CD8-positive, alpha-beta memory T cell (primary cell): ENCODE measurements at regions of chr1 and their contacts with region 1.

Region 1: DNA sequence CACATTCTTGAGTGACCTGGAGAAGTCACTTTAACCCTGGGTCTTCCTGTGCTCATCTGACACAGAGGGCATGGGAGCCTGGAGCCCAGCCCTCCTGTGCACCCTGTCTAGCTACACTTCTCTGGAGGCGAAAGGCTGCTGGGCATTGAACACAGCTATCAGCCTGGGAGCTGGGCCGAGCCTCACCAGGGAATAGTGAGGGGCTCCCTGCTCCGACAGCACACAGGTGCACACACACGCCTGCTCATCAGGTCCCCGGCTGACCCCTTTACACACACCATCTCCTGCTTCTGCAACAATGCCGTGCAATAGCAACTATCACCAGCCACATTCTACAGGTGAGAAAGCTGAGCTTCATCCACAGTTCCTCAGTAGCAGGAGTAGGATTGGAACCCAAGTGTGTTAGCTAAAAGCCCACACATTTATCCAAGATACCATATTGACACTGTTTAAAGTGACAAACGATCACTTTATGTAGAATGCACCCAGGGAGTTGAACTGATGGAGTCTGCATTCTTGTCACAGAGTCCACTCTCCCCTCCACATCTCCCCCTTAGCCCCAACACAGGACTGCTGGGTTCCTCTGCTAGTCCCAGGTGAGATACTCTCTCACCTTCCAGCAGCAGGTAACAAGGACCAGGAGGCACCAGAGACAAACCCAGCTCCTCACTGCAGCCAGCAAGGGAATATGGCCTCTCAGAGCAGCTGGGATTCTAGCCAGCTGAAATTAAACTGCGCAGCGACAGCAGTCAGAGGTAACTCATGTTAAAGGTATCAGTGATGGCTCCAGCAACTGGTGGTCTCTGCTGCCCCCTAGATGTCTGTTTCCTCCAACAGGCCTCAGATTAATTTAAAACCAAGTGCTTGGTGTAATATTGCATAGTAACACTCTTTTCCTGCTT is 18.3 kb upstream of the CAPN8 start:
- DNase-seq: peak; percentile 15 to 55 (median 45)
- H3K4me3 ChIP-seq: no peak overlapping the region
- H3K4me3 Mint-ChIP-seq: no peak overlapping the region
- H3K27ac ChIP-seq: no peak overlapping the region
- H3K27ac Mint-ChIP-seq: no peak overlapping the region
- H3K4me1 ChIP-seq: no peaks in the 10 kb centered on the region
- H3K4me1 Mint-ChIP-seq: no peaks in the 10 kb centered on the region
- H3K27me3 ChIP-seq: no peaks in the 10 kb centered on the region
- H3K27me3 Mint-ChIP-seq: peaks cover 9 to 39% of the 10 kb centered on the region in 2 donors

Region 2: GRCh38 chr1:223133824-223134435 is 549.9 kb before region 1 on chr1:
- CTCF ChIA-PET with region 1: interaction called, 46 read pairs
- POLR2A ChIA-PET with region 1: no interaction called
- DNase-seq: peak; percentile 66 to 80 (median 72)
- H3K4me3 ChIP-seq: peak overlapping the region; percentile 5
- H3K4me3 Mint-ChIP-seq: peak overlapping the region; percentile 13 to 79 (median 54)
- H3K27ac ChIP-seq: no peak overlapping the region
- H3K27ac Mint-ChIP-seq: peak overlapping the region in 1 of 8 donors; percentile 80
- H3K4me1 ChIP-seq: peaks cover 14% of the 10 kb centered on the region
- H3K4me1 Mint-ChIP-seq: peaks cover 9 to 18% (median 10%) of the 10 kb centered on the region in 3 donors
- H3K27me3 ChIP-seq: no peaks in the 10 kb centered on the region
- H3K27me3 Mint-ChIP-seq: peaks cover 11 to 31% of the 10 kb centered on the region in 2 donors

Region 3: DNA sequence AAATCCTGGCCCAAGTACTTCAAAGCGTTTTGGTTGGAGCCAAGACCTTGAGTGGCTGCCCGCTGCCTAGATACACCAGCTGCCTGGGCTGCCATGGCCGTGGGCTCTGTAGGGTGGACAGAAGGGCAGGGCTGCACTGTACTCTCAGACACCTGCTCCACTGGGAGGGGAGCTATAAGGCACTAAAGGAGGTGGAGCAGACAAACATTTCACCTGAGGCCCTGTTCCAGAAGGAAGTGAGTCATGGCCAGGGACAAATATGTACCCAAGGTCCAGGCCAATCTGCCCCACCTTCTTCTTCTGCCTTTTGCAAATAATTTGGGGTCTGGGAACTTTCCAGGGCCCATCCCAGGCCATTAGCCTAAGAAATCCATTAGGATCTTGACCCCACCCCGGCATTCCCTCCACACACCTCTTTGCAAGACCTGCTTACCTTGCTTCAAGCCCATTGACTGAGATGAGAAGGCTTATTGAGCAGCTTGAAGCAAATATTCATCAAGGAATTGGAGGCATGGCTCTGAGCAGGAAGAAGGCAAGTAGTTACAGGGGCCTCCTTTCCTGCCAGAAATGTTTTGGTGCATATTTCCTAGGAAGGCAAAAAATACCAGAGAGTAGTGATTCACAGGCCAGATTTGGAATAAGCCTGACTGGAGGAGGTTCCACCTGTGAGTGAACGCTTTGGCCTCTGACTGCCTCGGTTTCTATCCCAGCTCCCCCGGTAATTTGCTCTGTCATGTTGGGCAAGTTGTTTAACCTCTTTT is 18.1 kb before region 1 on chr1 and contains the start of gene CAPN8:
- CTCF ChIA-PET with region 1: no interaction called
- POLR2A ChIA-PET with region 1: no interaction called
- DNase-seq: no peak
- H3K4me3 ChIP-seq: no peak within 1 kb of the TSS
- H3K4me3 Mint-ChIP-seq: no peak within 1 kb of the TSS
- H3K27ac ChIP-seq: no peak within 1 kb of the TSS
- H3K27ac Mint-ChIP-seq: no peak within 1 kb of the TSS
- H3K4me1 ChIP-seq: no peaks in the 10 kb centered on the region
- H3K4me1 Mint-ChIP-seq: no peaks in the 10 kb centered on the region
- H3K27me3 ChIP-seq: no peaks in the 10 kb centered on the region
- H3K27me3 Mint-ChIP-seq: peaks cover 3 to 13% of the 10 kb centered on the region in 2 donors
- total RNA-seq, gene CAPN8: not detected